Activated CD8-positive, alpha-beta T cell treated with anti-CD3 and anti-CD28 coated beads for 36 hours (primary cell): ENCODE measurements at regions of chr1 and their contacts with region 1.

Region 1: DNA sequence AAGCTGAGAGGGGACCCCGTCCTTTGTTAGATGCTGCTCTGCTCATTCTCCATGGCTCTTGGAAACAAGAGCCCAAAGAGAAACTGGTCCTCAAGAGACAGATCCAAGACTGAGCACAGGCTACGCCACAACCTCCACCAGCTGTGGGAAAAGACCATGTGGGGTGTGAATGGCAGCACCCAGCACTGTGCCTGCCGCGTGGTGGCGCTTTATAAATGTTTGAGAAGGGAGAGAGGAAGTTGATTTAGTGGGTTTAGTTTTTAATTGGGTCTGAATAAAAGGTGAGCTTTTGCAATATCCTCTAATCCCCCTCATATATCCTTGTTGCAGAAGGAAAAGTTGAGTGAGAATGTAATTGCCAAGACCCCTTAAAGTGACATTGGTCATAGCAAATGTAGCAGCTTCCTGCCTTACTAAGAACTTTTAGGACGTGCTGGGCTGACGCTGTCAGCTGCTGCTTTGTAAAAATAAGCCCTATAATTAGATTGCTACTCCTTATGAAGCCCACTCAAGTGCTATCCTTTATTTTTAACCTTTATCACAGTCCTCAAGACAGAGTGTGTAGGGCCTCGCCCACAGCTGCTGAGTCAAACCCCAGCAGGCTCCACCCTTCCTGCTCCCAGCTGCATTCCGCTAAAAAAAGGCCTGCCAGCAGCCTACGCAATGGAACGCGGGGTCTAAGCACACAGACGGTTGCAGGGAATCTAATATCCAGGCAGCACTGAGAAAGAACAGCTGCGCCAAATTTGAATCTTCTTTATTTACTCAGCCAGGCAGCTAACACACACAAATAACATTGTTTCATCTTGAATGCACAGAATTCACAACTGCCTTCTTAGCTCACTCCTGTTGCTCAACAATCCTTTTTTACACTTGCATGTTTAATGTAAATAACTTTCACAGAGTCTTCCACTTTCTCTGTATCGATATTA is 47.4 kb upstream of the PRDX6 start:
- DNase-seq: peak; percentile 84
- ATAC-seq: peak; percentile 85
- H3K4me3 Mint-ChIP-seq: peak overlapping the region; percentile 62
- H3K27ac Mint-ChIP-seq: peak overlapping the region; percentile 86
- H3K4me1 Mint-ChIP-seq: peaks cover 25% of the 10 kb centered on the region
- H3K27me3 Mint-ChIP-seq: no peaks in the 10 kb centered on the region
- CTCF ChIP-seq: peak; percentile 88

Region 2: DNA sequence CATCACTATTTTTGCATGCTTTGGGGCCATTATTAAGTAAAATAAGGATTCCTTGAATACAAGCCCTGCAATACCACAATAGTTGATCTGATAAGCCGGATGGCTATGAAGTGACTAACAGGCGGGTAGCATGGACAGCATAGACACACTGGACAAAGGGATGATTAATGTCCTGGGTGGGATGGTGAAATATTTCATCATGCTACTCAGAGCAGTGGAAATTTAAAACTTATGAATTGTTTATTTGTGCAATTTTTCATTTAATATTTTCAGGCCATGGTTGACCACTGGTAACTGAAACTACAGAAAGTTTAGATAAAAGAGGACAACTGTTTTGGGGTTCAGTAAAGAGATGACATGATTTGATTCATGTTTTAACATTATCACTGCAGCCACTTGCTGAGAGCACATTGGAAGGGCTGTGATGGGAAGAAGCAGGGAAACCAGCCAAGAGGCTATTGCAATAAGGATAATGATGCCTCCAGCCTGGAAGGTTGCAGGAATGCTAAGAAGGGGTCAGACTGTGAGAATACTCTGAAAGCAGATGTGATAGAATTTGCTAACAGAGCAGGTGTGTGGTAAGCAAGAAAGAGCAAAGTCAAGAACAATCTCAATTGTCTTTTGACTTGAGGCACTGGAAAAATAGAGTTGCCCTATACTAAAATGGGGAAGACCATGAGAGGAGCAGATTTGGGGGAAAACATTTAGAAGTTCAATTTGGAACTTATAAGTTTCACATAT is 160.1 kb before region 1 on chr1:
- CTCF ChIA-PET with region 1: no interaction called
- POLR2A ChIA-PET with region 1: no interaction called
- intact Hi-C with region 1: no loop called
- DNase-seq: no peak
- ATAC-seq: no peak
- H3K4me3 Mint-ChIP-seq: no peak overlapping the region
- H3K27ac Mint-ChIP-seq: no peak overlapping the region
- H3K4me1 Mint-ChIP-seq: no peaks in the 10 kb centered on the region
- H3K27me3 Mint-ChIP-seq: peaks cover 1% of the 10 kb centered on the region
- CTCF ChIP-seq: no peak

Region 3: GRCh38 chr1:173330149-173330951 is 99.4 kb before region 1 on chr1:
- CTCF ChIA-PET with region 1: no interaction called
- POLR2A ChIA-PET with region 1: no interaction called
- intact Hi-C with region 1: no loop called
- DNase-seq: no peak
- ATAC-seq: no peak
- H3K4me3 Mint-ChIP-seq: peak overlapping the region; percentile 50
- H3K27ac Mint-ChIP-seq: peak overlapping the region; percentile 84
- H3K4me1 Mint-ChIP-seq: peaks cover 32% of the 10 kb centered on the region
- H3K27me3 Mint-ChIP-seq: no peaks in the 10 kb centered on the region
- CTCF ChIP-seq: no peak

Region 4: DNA sequence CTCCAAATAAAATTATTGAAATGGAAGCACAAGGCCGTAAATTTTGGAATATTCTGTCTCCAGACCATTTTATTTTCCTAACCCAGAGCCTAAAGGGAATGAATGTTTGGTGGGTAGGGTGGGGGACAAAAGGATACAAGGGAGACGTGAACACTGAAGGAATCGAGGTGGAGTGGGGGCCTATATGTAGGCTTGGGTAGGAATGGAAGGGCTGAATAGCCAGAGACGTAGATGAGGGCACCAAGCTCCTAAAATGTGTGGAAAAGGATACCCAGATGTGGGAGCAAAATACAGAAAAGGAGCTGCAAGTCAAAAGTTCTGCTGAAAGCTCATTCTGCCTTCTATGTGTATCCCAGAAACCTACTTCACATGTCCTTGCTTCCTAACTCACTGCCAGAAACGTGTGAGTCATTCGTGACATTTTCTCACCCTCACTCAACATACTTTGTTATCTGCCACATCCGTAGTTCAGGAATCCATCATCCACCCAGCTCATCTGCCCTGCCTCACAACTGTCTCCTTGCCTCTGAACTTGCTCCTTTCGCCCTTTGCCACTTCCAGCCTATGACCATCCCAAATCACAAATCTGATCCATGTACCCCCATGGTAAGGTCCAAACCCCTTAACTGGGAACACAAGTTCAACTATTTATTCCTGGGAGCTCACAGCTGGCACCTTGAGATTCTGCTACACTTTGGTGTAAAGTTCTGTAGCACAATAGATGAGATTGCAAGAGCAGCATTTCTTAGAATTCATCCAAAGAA is 36.7 kb before region 1 on chr1:
- CTCF ChIA-PET with region 1: no interaction called
- POLR2A ChIA-PET with region 1: no interaction called
- intact Hi-C with region 1: no loop called
- DNase-seq: no peak
- ATAC-seq: no peak
- H3K4me3 Mint-ChIP-seq: no peak overlapping the region
- H3K27ac Mint-ChIP-seq: no peak overlapping the region
- H3K4me1 Mint-ChIP-seq: no peaks in the 10 kb centered on the region
- H3K27me3 Mint-ChIP-seq: no peaks in the 10 kb centered on the region
- CTCF ChIP-seq: no peak

Region 5: DNA sequence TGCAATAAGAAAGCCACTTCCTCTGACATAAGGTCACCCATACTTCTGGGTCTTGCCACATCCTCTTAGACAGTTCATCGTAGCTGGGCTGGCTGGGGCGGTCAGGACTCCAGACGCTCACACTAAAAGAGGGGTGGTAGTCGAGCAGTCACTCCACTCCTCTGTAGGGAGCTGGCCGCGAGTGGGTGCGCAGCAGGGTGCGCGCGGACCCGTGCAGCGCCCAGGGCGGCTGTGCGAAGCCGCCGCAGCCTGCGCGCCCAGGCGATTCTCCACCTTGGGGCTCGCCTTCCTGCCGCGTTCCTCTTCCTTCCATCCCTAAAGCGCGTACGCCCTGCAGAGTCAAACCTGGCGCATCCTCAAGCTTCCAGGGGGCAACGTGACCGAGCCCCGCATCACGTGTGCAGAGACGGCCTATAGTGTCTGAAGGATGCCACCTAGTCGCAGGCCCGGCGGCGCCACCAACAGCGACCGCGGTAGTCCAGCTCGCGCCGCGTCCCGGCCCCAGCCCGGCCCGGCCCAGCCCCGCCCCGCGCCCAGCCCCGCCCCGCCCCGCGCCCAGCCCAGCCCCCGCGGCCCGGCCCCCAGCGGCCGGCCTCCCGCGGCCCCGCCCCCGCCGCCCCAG is 47.0 kb after region 1 on chr1:
- CTCF ChIA-PET with region 1: interaction called, 53 read pairs
- POLR2A ChIA-PET with region 1: interaction called, 6 read pairs
- intact Hi-C with region 1: loop called (anchors 2 kb)
- DNase-seq: peak; percentile 84
- ATAC-seq: peak; percentile 84
- H3K4me3 Mint-ChIP-seq: peak overlapping the region; percentile 83
- H3K27ac Mint-ChIP-seq: peak overlapping the region; percentile 95
- H3K4me1 Mint-ChIP-seq: peaks cover 61% of the 10 kb centered on the region
- H3K27me3 Mint-ChIP-seq: no peaks in the 10 kb centered on the region
- CTCF ChIP-seq: no peak

Region 6: GRCh38 chr1:173507205-173507846 is 77.6 kb after region 1 on chr1:
- CTCF ChIA-PET with region 1: interaction called, 27 read pairs
- POLR2A ChIA-PET with region 1: no interaction called
- intact Hi-C with region 1: loop called (anchors 2 kb)
- DNase-seq: no peak
- ATAC-seq: no peak
- H3K4me3 Mint-ChIP-seq: no peak overlapping the region
- H3K27ac Mint-ChIP-seq: no peak overlapping the region
- H3K4me1 Mint-ChIP-seq: no peaks in the 10 kb centered on the region
- H3K27me3 Mint-ChIP-seq: no peaks in the 10 kb centered on the region
- CTCF ChIP-seq: no peak

Region 7: GRCh38 chr1:173714759-173715537 is 285.2 kb after region 1 on chr1 and contains the start of gene KLHL20:
- CTCF ChIA-PET with region 1: interaction called, 16 read pairs
- POLR2A ChIA-PET with region 1: interaction called, 7 read pairs
- intact Hi-C with region 1: no loop called
- DNase-seq: peak; percentile 90
- ATAC-seq: peak; percentile 98
- H3K4me3 Mint-ChIP-seq: peak within 1 kb of the TSS; percentile 92
- H3K27ac Mint-ChIP-seq: peak within 1 kb of the TSS; percentile 94
- H3K4me1 Mint-ChIP-seq: peaks cover 13% of the 10 kb centered on the region
- H3K27me3 Mint-ChIP-seq: peaks cover 12% of the 10 kb centered on the region
- CTCF ChIP-seq: no peak
- total RNA-seq, gene KLHL20: 14.5 to 15.8 TPM